SK-N-SH (cell line): ENCODE measurements at regions of chr7 and their contacts with region 1.

Region 1: DNA sequence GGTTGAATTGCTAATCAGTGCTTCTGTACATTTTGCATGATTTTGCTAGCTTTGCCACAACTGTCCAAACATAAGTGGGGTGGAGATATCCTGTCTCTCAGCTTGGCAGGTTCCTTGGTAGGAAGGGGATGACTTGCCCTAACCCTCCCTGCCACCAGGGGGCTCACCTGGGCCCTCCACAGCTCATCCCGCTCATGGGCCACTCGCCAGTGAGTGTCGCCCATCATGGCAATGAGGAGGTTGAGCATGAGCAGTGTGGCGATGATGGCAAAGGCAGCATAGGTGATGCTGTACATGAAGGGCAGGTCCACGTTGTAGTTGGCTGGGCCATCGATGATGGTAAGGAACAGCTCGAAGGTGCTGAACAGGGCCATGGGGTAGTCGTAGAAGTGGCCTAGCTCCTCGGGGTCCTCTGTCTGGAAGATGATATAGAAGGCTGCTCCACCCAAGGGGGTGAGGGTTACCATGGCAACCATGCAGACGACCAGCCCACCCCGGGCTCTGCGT is 12.2 kb downstream of the TRPV6 start:
- DNase-seq: peak; percentile 67
- H3K4me3 ChIP-seq: no peak overlapping the region
- H3K27ac ChIP-seq: no peak overlapping the region
- H3K4me1 ChIP-seq: no peaks in the 10 kb centered on the region
- H3K27me3 ChIP-seq: peaks cover 30% of the 10 kb centered on the region; the same call in 1 of the 2 replicates
- CTCF ChIP-seq: peak; percentile 61
- EP300 ChIP-seq: no peak
- RAD21 ChIP-seq: no peak

Region 2: DNA sequence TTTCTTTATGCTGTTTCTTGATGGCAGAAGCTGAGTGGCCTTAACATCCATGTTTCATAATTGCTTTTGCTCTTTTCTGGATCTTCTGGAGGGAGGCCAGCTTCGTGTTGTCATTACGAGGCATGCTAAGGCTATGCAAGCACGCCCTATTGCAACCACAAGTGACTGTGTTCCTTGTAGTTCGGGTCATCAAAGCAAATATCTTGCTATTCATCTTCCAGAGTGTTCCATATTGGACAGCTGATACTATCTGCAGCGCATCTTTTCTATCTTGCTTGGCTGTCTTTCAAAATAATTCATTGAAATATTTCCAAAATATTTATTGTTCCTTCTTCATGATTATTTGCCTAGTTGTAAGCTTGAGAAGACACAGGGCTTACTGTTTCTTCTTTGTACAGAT is 13.5 kb before region 1 on chr7:
- CTCF ChIA-PET with region 1: interaction called, 154 read pairs
- POLR2A ChIA-PET with region 1: interaction called, 3 read pairs
- DNase-seq: no peak
- H3K4me3 ChIP-seq: no peak overlapping the region
- H3K27ac ChIP-seq: no peak overlapping the region
- H3K4me1 ChIP-seq: peaks cover 0 to 9% of the 10 kb centered on the region in 2 experiments; a peak in 2 of 4 replicates
- H3K27me3 ChIP-seq: peaks cover 17% of the 10 kb centered on the region
- CTCF ChIP-seq: no peak
- EP300 ChIP-seq: peak in 1 of 2 experiments; percentile 55; a peak in 1 of 4 replicates
- RAD21 ChIP-seq: no peak